ENCODE measurements at regions of chr5 and their contacts with region 1.

Region 1: GRCh38 chr5:169583424-169584204 is at the start of gene SPDL1:
- DNase-seq: peak; percentile 92 to 97 (median 97)
- H3K4me3 ChIP-seq: peak within 1 kb of the TSS; percentile 89
- H3K27ac ChIP-seq: peak within 1 kb of the TSS in 1 of 2 donors; percentile 53
- H3K4me1 ChIP-seq: peaks cover 2% of the 10 kb centered on the region
- H3K27me3 ChIP-seq: no peaks in the 10 kb centered on the region
- CTCF ChIP-seq: no peak
- EP300 ChIP-seq: no peak
- POLR2A ChIP-seq: no peak
- total RNA-seq, gene SPDL1: 4.1 to 10.4 (median 7.2) TPM

Region 2: DNA sequence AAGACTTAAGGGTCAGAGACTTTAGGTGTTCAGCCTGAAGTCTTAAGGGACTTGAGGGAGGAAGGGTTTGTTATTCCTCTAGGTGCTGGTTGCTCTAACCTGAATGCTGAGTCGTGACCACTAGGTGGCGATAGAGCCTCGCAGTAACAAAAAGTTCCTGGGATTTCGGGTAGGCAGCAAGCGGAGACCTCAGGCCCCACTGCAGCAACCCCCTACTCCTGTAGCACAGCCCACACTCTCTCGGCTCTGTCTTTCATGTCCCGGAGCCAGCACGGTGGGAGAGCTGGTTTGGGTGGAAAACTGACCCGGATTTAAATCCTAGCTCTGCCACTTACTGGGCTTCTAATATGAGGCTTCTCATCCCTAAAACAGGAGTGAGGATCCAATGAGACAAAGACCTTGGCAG is 904.1 kb before region 1 on chr5:
- intact Hi-C with region 1: loop called in 3 of 4 experiments (anchors 10 kb)
- DNase-seq: peak; percentile 65 to 87 (median 84)
- H3K4me3 ChIP-seq: no peak overlapping the region
- H3K27ac ChIP-seq: no peak overlapping the region
- H3K4me1 ChIP-seq: peaks cover 8% of the 10 kb centered on the region
- H3K27me3 ChIP-seq: no peaks in the 10 kb centered on the region
- CTCF ChIP-seq: peak; percentile 76 to 84 (median 77)
- EP300 ChIP-seq: no peak
- POLR2A ChIP-seq: no peak

Region 3: GRCh38 chr5:169197343-169197742 is 386.3 kb before region 1 on chr5:
- intact Hi-C with region 1: no loop called
- DNase-seq: no peak
- H3K4me3 ChIP-seq: no peak overlapping the region
- H3K27ac ChIP-seq: no peak overlapping the region
- H3K4me1 ChIP-seq: peaks cover 2% of the 10 kb centered on the region
- H3K27me3 ChIP-seq: no peaks in the 10 kb centered on the region
- CTCF ChIP-seq: peak in 1 of 3 donors; percentile 7
- EP300 ChIP-seq: no peak
- POLR2A ChIP-seq: no peak

Region 4: DNA sequence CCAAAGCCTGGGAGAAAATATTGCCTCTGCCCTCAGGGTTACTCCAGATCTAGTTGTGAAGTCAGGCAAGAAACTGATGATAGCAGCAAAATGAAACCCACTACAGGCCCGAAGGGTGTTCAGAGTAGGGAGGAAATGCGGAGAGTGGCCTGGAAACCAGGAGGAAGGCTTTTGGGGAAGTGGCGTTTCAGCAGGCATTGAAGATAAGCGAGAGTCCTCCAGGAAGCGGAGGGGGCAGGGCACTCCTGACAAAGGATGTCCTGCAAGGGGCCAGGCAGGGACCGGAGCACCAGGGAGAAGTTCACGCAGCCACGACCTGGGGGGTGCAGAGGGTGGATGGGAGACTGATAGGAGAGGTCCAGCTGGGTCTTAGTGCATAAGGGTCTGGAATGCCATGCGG is 514.3 kb after region 1 on chr5:
- intact Hi-C with region 1: no loop called
- DNase-seq: no peak
- H3K4me3 ChIP-seq: no peak overlapping the region
- H3K27ac ChIP-seq: no peak overlapping the region
- H3K4me1 ChIP-seq: peaks cover 1% of the 10 kb centered on the region
- H3K27me3 ChIP-seq: no peaks in the 10 kb centered on the region
- CTCF ChIP-seq: no peak
- EP300 ChIP-seq: no peak
- POLR2A ChIP-seq: no peak